ENCODE measurements at regions of chr7 and their contacts with region 1.

Region 1: DNA sequence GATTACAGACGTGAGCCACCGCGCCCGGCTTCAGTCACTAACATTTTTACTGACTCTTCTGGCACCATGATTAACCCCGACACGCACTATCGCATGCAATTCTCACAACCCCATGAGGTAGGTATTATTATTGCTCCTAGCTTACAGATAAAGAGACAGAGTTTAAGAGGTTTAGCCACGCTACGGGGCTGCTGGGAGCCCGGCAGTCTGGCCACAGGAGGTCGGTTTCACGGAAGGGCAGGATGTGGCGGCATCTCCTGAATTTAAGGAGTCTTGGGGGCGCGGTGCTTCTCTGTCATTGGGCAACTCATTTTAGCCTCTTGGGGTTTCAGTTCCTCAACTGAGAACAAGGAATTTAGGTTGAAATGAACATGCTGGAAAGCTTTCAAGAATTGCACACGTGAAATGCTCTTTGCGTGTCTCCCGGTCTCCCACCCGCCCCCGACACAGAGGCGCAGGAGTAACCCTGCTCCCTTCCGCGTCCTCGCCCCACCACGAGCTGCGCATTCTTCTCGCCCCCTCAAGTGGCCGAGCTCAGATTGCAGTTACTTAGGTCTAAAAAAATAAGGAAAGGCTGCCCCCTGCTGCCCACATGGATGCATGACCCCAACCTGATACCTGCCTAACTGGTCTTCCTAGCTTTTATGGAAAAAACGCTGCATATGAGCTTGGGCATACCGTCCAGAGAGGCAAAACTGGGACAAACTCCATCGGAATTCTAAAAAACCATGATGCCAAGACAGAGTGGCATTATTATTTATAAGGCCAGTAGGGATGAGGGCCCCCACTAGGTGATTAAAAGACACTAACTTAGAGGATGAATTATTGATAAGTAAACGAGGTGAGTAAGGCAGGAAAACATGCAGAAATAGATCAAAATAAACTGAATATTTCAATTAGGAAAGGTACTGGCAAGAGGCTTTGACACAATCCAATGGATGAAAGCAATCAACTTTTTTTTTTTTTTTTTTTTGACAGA is 12.4 kb downstream of the PRSS2 start:
- DNase-seq: peak; percentile 85
- H3K4me3 Mint-ChIP-seq: peak overlapping the region; percentile 70
- H3K27ac Mint-ChIP-seq: peak overlapping the region; percentile 90
- H3K4me1 Mint-ChIP-seq: peaks cover 3% of the 10 kb centered on the region
- H3K27me3 Mint-ChIP-seq: no peaks in the 10 kb centered on the region

Region 2: GRCh38 chr7:142603870-142604448 is 179.3 kb before region 1 on chr7:
- CTCF ChIA-PET with region 1: interaction called, 12 read pairs
- POLR2A ChIA-PET with region 1: no interaction called
- intact Hi-C with region 1: no loop called
- DNase-seq: peak; percentile 58
- H3K4me3 Mint-ChIP-seq: peak overlapping the region; percentile 35
- H3K27ac Mint-ChIP-seq: no peak overlapping the region
- H3K4me1 Mint-ChIP-seq: peaks cover 3% of the 10 kb centered on the region
- H3K27me3 Mint-ChIP-seq: no peaks in the 10 kb centered on the region

Region 3: GRCh38 chr7:142632291-142633134 is 150.7 kb before region 1 on chr7:
- CTCF ChIA-PET with region 1: interaction called, 54 read pairs
- POLR2A ChIA-PET with region 1: interaction called, 7 read pairs
- intact Hi-C with region 1: loop called (anchors 1 kb)
- DNase-seq: peak; percentile 66
- H3K4me3 Mint-ChIP-seq: no peak overlapping the region
- H3K27ac Mint-ChIP-seq: no peak overlapping the region
- H3K4me1 Mint-ChIP-seq: peaks cover 3% of the 10 kb centered on the region
- H3K27me3 Mint-ChIP-seq: no peaks in the 10 kb centered on the region

Region 4: GRCh38 chr7:142689439-142690120 is 93.6 kb before region 1 on chr7:
- CTCF ChIA-PET with region 1: interaction called, 8 read pairs
- POLR2A ChIA-PET with region 1: no interaction called
- intact Hi-C with region 1: loop called (anchors 1 kb)
- DNase-seq: no peak
- H3K4me3 Mint-ChIP-seq: no peak overlapping the region
- H3K27ac Mint-ChIP-seq: no peak overlapping the region
- H3K4me1 Mint-ChIP-seq: peaks cover 33% of the 10 kb centered on the region
- H3K27me3 Mint-ChIP-seq: no peaks in the 10 kb centered on the region

Region 5: GRCh38 chr7:142796608-142797385 is 13.6 kb after region 1 on chr7:
- CTCF ChIA-PET with region 1: interaction called, 17 read pairs
- POLR2A ChIA-PET with region 1: interaction called, 195 read pairs
- intact Hi-C with region 1: loop called (anchors 1 kb)
- DNase-seq: no peak
- H3K4me3 Mint-ChIP-seq: peak overlapping the region; percentile 100
- H3K27ac Mint-ChIP-seq: peak overlapping the region; percentile 100
- H3K4me1 Mint-ChIP-seq: peaks cover 62% of the 10 kb centered on the region
- H3K27me3 Mint-ChIP-seq: no peaks in the 10 kb centered on the region

Measured in activated CD4-positive, alpha-beta memory T cell treated with anti-CD3 and anti-CD28 coated beads for 36 hours (primary cell).